Transverse colon (tissue), 4 donors: ENCODE measurements at regions of chr20 and their contacts with region 1.

Region 1: GRCh38 chr20:36031806-36032205 is 63.4 kb downstream of the CNBD2 start:
- DNase-seq: no peak
- H3K4me3 ChIP-seq: no peak overlapping the region
- H3K27ac ChIP-seq: no peak overlapping the region
- H3K4me1 ChIP-seq: no peaks in the 10 kb centered on the region
- H3K27me3 ChIP-seq: no peaks in the 10 kb centered on the region
- CTCF ChIP-seq: no peak
- EP300 ChIP-seq: no peak
- POLR2A ChIP-seq: no peak

Region 2: GRCh38 chr20:35968931-35969330 is 62.9 kb before region 1 on chr20:
- in situ Hi-C with region 1: no loop called
- intact Hi-C with region 1: loop called (anchors 2 kb)
- DNase-seq: no peak
- H3K4me3 ChIP-seq: no peak overlapping the region
- H3K27ac ChIP-seq: no peak overlapping the region
- H3K4me1 ChIP-seq: peaks cover 0 to 8% (median 3%) of the 10 kb centered on the region in 4 donors
- H3K27me3 ChIP-seq: no peaks in the 10 kb centered on the region
- CTCF ChIP-seq: no peak
- EP300 ChIP-seq: no peak
- POLR2A ChIP-seq: no peak

Region 3: DNA sequence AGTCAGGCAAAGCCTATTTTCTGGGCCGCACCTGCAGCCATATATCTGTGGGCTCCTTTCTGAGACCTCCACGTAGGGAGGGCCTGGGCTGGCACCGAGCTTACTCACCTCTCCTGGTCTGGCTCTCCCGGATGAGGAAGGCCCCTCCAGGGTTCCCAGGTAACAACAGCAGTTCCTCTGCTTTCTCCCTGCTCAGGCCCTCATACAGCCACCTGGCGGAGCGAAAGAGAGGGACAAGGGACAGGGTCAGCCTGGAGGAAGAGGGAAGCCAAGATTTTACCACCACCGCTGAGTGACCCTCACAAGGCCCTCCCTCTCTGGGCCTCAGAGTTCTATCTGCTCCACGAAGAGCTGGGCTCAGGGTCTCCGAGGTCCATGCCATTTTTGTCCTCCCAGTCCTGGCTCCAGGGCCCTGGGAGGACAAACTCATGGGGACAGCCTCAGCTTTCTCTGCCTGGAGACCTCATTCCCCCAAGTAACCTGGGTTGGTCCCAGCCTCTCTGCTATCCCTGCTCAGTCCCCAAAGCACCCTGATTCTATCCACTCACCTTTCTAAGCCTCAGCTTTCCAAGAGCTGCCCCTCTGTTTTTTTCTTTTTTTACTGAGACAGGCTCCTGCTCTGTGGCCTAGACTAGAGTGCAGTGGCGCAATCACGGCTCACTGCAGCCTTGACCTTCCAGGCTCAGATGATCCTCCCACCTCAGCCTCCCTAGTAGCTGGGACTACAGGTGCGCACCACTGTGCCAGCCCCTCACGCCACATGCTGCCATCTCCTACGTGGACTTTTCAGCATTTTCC is 600.9 kb after region 1 on chr20:
- in situ Hi-C with region 1: no loop called
- intact Hi-C with region 1: no loop called
- DNase-seq: no peak
- H3K4me3 ChIP-seq: no peak overlapping the region
- H3K27ac ChIP-seq: no peak overlapping the region
- H3K4me1 ChIP-seq: no peaks in the 10 kb centered on the region
- H3K27me3 ChIP-seq: no peaks in the 10 kb centered on the region
- CTCF ChIP-seq: no peak
- EP300 ChIP-seq: no peak
- POLR2A ChIP-seq: no peak